ENCODE measurements at regions of chr5 and their contacts with region 1.

Region 1: DNA sequence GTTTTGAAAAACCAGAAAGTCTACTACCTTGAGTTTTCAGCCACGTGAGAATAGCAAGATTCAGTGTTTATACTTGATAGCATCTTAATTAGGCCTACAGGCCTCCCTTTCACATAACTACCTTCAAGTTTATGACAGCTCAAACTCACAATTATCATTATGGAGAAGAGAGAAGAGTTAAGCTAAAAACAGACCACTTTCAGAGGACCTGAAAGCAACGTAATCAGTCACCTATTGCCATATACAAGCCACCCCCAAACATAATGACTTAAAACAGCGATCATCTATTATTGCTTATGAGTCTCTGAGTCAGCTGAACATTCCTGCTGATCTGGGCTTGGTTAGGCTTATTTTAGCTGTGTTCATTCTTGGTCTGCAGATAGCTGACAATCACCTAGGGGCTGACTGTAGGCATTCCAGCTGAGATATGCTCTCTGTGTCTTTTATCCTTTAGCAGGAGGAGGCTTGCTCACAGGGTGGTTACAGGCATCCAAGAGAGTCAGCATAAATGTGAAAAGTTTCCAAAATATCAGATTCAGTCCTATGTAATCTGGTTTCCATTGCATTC is 130.9 kb downstream of the COX7C start:
- DNase-seq: no peak
- H3K4me3 ChIP-seq: no peak overlapping the region
- H3K27ac ChIP-seq: no peak overlapping the region
- H3K4me1 ChIP-seq: no peaks in the 10 kb centered on the region
- H3K27me3 ChIP-seq: no peaks in the 10 kb centered on the region
- CTCF ChIP-seq: no peak

Region 2: GRCh38 chr5:85538362-85538761 is 1210.3 kb before region 1 on chr5:
- intact Hi-C with region 1: no loop called
- DNase-seq: no peak
- H3K4me3 ChIP-seq: no peak overlapping the region
- H3K27ac ChIP-seq: no peak overlapping the region
- H3K4me1 ChIP-seq: no peaks in the 10 kb centered on the region
- H3K27me3 ChIP-seq: no peaks in the 10 kb centered on the region
- CTCF ChIP-seq: no peak

Region 3: DNA sequence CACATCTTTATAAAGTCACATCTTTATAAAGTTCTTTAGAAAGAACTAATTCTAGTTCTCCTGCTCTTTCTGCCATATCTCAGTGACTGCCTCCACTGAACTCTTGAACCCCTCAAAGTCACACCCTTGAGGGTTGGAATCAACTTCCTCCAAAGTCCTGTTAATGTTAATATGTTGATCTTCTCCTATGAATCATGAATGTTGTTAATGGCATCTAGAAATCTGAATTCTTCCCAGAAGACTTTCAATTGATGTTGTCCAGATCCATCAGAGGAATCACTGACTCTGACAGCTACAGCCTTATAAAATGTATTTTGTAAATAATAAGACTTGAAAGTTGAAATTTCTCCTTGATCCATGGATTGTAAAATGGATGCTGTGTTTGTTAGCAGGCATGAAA is 82.5 kb after region 1 on chr5:
- intact Hi-C with region 1: loop called (anchors 5 kb)
- DNase-seq: no peak
- H3K4me3 ChIP-seq: no peak overlapping the region
- H3K27ac ChIP-seq: no peak overlapping the region
- H3K4me1 ChIP-seq: no peaks in the 10 kb centered on the region
- H3K27me3 ChIP-seq: no peaks in the 10 kb centered on the region
- CTCF ChIP-seq: no peak